OCI-LY7 (cell line): ENCODE measurements at regions of chr3 and their contacts with region 1.

Region 1: GRCh38 chr3:62500556-62501288 is 127.4 kb upstream of the FEZF2 start:
- DNase-seq: peak; percentile 10
- H3K4me3 ChIP-seq: no peak overlapping the region
- H3K27ac ChIP-seq: no peak overlapping the region
- H3K4me1 ChIP-seq: peaks cover 50% of the 10 kb centered on the region
- CTCF ChIP-seq: no peak

Region 2: DNA sequence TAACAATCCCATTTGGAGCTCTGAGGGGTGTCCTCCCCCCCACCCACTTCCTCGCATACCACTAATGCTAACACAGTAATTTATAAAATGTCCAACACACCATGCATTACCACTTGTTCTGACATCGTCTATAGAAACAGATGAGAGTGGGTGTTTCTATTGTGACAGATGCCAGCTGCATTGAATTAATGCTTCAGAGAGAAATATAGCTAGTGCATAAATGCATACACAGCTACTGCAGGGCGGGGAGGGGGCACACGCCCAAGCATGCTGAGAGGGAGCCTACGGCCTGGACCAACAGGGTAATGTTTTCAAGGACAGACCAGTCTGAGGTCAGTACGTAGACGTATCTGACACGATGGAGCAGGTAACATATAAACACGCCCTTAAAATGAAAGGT is 21.4 kb before region 1 on chr3:
- CTCF ChIA-PET with region 1: no interaction called
- POLR2A ChIA-PET with region 1: interaction called, 11 read pairs
- intact Hi-C with region 1: no loop called
- DNase-seq: no peak
- H3K4me3 ChIP-seq: no peak overlapping the region
- H3K27ac ChIP-seq: no peak overlapping the region
- H3K4me1 ChIP-seq: peaks cover 12% of the 10 kb centered on the region
- CTCF ChIP-seq: no peak

Region 3: GRCh38 chr3:62823461-62824050 is 322.8 kb after region 1 on chr3:
- CTCF ChIA-PET with region 1: no interaction called
- POLR2A ChIA-PET with region 1: interaction called, 4 read pairs
- intact Hi-C with region 1: loop called (anchors 10 kb)
- DNase-seq: peak; percentile 84
- H3K4me3 ChIP-seq: peak overlapping the region; percentile 65
- H3K27ac ChIP-seq: peak overlapping the region; percentile 85
- H3K4me1 ChIP-seq: peaks cover 96% of the 10 kb centered on the region
- CTCF ChIP-seq: no peak